B cell (primary cell): ENCODE measurements at regions of chr6 and their contacts with region 1.

Region 1: GRCh38 chr6:29865631-29866030 is 38.0 kb downstream of the HLA-G start:
- DNase-seq: no peak
- ATAC-seq: no peak
- H3K4me3 ChIP-seq: no peak overlapping the region
- H3K4me3 Mint-ChIP-seq: no peak overlapping the region
- H3K27ac ChIP-seq: no peak overlapping the region
- H3K27ac Mint-ChIP-seq: no peak overlapping the region
- H3K4me1 ChIP-seq: no peaks in the 10 kb centered on the region
- H3K4me1 Mint-ChIP-seq: no peaks in the 10 kb centered on the region
- H3K27me3 ChIP-seq: peaks cover 0 to 40% (median 8%) of the 10 kb centered on the region in 4 experiments
- H3K27me3 Mint-ChIP-seq: peaks cover 57% of the 10 kb centered on the region
- CTCF ChIP-seq: no peak

Region 2: GRCh38 chr6:29909985-29910384 is 44.4 kb after region 1 on chr6:
- CTCF ChIA-PET with region 1: no interaction called
- POLR2A ChIA-PET with region 1: no interaction called
- intact Hi-C with region 1: loop called (anchors 1 kb)
- DNase-seq: no peak
- ATAC-seq: no peak
- H3K4me3 ChIP-seq: no peak overlapping the region
- H3K4me3 Mint-ChIP-seq: no peak overlapping the region
- H3K27ac ChIP-seq: no peak overlapping the region
- H3K27ac Mint-ChIP-seq: no peak overlapping the region
- H3K4me1 ChIP-seq: no peaks in the 10 kb centered on the region
- H3K4me1 Mint-ChIP-seq: no peaks in the 10 kb centered on the region
- H3K27me3 ChIP-seq: peaks cover 0 to 15% (median 1%) of the 10 kb centered on the region in 4 experiments
- H3K27me3 Mint-ChIP-seq: no peaks in the 10 kb centered on the region
- CTCF ChIP-seq: no peak